PC-9 (cell line): ENCODE measurements at regions of chr1 and their contacts with region 1.

Region 1: GRCh38 chr1:43358746-43359693 is at the start of gene CDC20:
- DNase-seq: peak; percentile 95 to 99
- H3K4me3 ChIP-seq: peak within 1 kb of the TSS; percentile 86
- H3K27ac ChIP-seq: peak within 1 kb of the TSS; percentile 83
- H3K4me1 ChIP-seq: peaks cover 47% of the 10 kb centered on the region
- H3K27me3 ChIP-seq: no peaks in the 10 kb centered on the region
- CTCF ChIP-seq: no peak
- total RNA-seq, gene CDC20: 180 and 229 TPM in 2 replicates

Region 2: DNA sequence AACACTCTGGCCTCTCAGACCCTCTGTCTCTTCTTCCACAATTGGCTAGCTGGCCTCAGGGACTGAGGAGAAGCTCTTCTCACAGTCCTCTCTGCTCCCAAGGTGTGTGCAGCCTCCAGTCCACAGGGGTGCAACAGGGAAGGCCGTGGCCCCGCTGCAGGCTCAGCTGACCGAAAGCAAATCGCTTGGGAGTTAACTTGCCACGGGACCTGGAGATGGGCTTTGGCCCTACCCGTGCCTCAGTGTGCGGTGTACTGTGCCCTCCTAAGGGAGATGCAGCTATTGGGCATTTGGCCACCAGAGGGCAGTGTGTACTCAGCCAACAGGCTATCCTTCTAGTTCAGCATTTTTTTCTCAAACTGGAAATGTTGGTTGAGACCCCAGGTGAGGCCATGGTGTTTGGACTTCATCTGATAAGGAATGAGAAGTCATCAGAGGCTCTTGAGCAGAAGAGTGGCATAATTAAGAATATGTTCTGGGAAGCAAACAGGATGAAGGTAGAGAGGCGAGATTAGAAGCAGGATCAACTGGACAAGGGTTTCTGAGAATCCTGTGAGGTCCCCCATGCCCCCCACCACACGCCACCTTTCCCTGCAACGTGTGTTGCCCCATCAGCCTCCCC is 131.8 kb before region 1 on chr1:
- CTCF ChIA-PET with region 1: interaction called, 4 read pairs
- POLR2A ChIA-PET with region 1: no interaction called
- intact Hi-C with region 1: loop called (anchors 1 kb)
- DNase-seq: peak; percentile 73 to 88
- H3K4me3 ChIP-seq: no peak overlapping the region
- H3K27ac ChIP-seq: no peak overlapping the region
- H3K4me1 ChIP-seq: peaks cover 16% of the 10 kb centered on the region
- H3K27me3 ChIP-seq: no peaks in the 10 kb centered on the region
- CTCF ChIP-seq: peak; percentile 97

Region 3: GRCh38 chr1:43238085-43238484 is 120.9 kb before region 1 on chr1:
- CTCF ChIA-PET with region 1: interaction called, 3 read pairs
- POLR2A ChIA-PET with region 1: no interaction called
- intact Hi-C with region 1: loop called (anchors 1 kb)
- DNase-seq: peak; percentile 47 to 73
- H3K4me3 ChIP-seq: no peak overlapping the region
- H3K27ac ChIP-seq: no peak overlapping the region
- H3K4me1 ChIP-seq: peaks cover 12% of the 10 kb centered on the region
- H3K27me3 ChIP-seq: no peaks in the 10 kb centered on the region
- CTCF ChIP-seq: peak; percentile 84

Region 4: GRCh38 chr1:43270413-43271095 is 88.5 kb before region 1 on chr1:
- CTCF ChIA-PET with region 1: interaction called, 3 read pairs
- POLR2A ChIA-PET with region 1: interaction called, 4 read pairs
- intact Hi-C with region 1: loop called (anchors 2 kb)
- DNase-seq: peak; percentile 94 to 96
- H3K4me3 ChIP-seq: peak overlapping the region; percentile 59
- H3K27ac ChIP-seq: peak overlapping the region; percentile 81
- H3K4me1 ChIP-seq: peaks cover 25% of the 10 kb centered on the region
- H3K27me3 ChIP-seq: no peaks in the 10 kb centered on the region
- CTCF ChIP-seq: no peak

Region 5: DNA sequence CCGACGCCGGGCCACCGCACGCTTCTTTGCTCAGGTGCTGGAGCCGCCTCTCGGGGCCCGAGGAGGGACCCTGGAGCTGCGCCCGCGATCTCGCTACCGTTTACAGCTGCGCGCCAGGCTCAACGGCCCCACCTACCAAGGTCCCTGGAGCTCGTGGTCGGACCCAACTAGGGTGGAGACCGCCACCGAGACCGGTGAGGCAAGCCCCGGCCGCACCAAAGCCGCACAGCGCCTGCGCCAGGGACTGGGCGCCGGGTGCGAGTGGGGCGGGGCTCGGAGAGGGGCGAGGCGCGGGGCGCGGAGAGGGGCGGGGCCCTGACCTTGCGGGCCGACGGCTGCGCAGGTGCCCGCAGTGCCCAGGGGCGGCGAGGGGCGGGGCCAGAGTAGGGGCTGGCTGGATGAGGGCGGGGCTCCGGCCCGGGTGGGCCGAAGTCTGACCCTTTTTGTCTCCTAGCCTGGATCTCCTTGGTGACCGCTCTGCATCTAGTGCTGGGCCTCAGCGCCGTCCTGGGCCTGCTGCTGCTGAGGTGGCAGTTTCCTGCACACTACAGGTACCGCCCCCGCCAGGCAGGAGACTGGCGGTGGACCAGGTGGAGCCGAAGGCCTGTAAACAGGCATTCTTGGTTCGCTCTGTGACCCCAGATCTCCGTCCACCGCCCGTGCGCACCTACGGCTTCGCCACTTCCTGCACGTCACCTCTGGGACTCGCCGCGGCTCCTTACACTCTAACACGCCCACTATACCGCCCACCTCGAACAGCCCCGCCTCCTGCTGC is 10.0 kb before region 1 on chr1:
- CTCF ChIA-PET with region 1: interaction called, 3 read pairs
- POLR2A ChIA-PET with region 1: interaction called, 13 read pairs
- intact Hi-C with region 1: no loop called
- DNase-seq: peak; percentile 85 to 99
- H3K4me3 ChIP-seq: peak overlapping the region; percentile 66
- H3K27ac ChIP-seq: peak overlapping the region; percentile 94
- H3K4me1 ChIP-seq: peaks cover 48% of the 10 kb centered on the region
- H3K27me3 ChIP-seq: no peaks in the 10 kb centered on the region
- CTCF ChIP-seq: no peak

Region 6: GRCh38 chr1:43389326-43390313 is 30.6 kb after region 1 on chr1 and contains the starts of genes MED8 and SZT2:
- CTCF ChIA-PET with region 1: no interaction called
- POLR2A ChIA-PET with region 1: no interaction called
- intact Hi-C with region 1: loop called (anchors 2 kb)
- DNase-seq: peak; percentile 92 to 97
- H3K4me3 ChIP-seq: peak within 1 kb of the TSS; percentile 80
- H3K27ac ChIP-seq: peak within 1 kb of the TSS; percentile 82
- H3K4me1 ChIP-seq: peaks cover 22% of the 10 kb centered on the region
- H3K27me3 ChIP-seq: no peaks in the 10 kb centered on the region
- CTCF ChIP-seq: no peak
- total RNA-seq, gene MED8: 54.8 and 56.0 TPM in 2 replicates
- total RNA-seq, gene SZT2: 71.6 and 76.1 TPM in 2 replicates